ENCODE measurements at regions of chr6 and their contacts with region 1.

Region 1: GRCh38 chr6:137233911-137234863 is 15.0 kb upstream of the IFNGR1 start:
- DNase-seq: peak; percentile 27 to 99
- H3K4me3 ChIP-seq: peak overlapping the region; percentile 2; the same call in 1 of the 2 replicates
- H3K27ac ChIP-seq: peak overlapping the region; percentile 92
- H3K4me1 ChIP-seq: peaks cover 61% of the 10 kb centered on the region
- H3K27me3 ChIP-seq: no peaks in the 10 kb centered on the region
- CTCF ChIP-seq: no peak

Region 2: DNA sequence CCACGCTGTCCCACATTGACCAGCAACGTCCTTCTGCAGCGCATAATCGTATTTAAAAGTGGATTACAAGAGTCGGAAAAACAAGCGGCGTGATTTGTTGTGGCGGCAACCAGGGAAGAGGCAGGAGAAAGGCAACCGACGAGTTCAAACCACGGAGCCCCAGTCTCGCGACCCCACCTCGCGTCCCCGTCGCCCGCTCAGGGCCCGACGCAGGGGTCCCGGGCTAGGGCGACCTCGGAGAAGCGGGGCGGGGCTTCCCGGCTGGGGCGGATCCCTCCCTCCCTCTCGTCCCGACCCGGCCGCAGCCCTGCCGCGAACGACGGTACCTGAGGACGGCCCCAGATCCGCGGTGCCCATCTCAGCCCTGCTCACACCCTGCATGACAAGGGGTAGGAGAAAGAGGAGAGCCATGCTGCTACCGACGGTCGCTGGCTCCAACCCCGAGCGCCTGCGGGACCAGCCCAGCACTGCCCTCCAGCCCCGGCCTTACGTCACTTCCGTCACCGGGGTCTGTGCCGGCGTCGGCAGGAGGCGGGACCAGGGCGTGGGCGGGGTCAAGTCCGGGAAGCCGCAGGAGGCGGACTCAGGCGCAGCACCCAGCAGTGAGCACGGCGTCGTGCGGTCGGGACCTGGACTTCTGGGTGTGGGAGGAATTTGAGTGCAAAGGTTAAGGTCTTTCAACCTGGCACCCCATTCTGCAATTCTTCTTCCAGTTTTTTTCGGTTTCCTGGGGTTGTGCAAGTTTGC is 15.1 kb before region 1 on chr6 and contains the start of gene IFNGR1:
- CTCF ChIA-PET with region 1: no interaction called
- POLR2A ChIA-PET with region 1: interaction called, 32 read pairs
- intact Hi-C with region 1: loop called (anchors 2 kb)
- DNase-seq: peak; percentile 95 to 96
- H3K4me3 ChIP-seq: peak within 1 kb of the TSS; percentile 88
- H3K27ac ChIP-seq: peak within 1 kb of the TSS; percentile 90
- H3K4me1 ChIP-seq: peaks cover 55% of the 10 kb centered on the region
- H3K27me3 ChIP-seq: no peaks in the 10 kb centered on the region
- CTCF ChIP-seq: no peak
- total RNA-seq, gene IFNGR1: 17.9 and 19.5 TPM in 2 replicates

Region 3: GRCh38 chr6:137261393-137262160 is 27.4 kb after region 1 on chr6:
- CTCF ChIA-PET with region 1: no interaction called
- POLR2A ChIA-PET with region 1: no interaction called
- intact Hi-C with region 1: loop called (anchors 2 kb)
- DNase-seq: peak in 1 of 2 experiments; percentile 96
- H3K4me3 ChIP-seq: peak overlapping the region; percentile 28
- H3K27ac ChIP-seq: peak overlapping the region; percentile 68
- H3K4me1 ChIP-seq: peaks cover 20% of the 10 kb centered on the region
- H3K27me3 ChIP-seq: peaks cover 24% of the 10 kb centered on the region
- CTCF ChIP-seq: no peak

Region 4: DNA sequence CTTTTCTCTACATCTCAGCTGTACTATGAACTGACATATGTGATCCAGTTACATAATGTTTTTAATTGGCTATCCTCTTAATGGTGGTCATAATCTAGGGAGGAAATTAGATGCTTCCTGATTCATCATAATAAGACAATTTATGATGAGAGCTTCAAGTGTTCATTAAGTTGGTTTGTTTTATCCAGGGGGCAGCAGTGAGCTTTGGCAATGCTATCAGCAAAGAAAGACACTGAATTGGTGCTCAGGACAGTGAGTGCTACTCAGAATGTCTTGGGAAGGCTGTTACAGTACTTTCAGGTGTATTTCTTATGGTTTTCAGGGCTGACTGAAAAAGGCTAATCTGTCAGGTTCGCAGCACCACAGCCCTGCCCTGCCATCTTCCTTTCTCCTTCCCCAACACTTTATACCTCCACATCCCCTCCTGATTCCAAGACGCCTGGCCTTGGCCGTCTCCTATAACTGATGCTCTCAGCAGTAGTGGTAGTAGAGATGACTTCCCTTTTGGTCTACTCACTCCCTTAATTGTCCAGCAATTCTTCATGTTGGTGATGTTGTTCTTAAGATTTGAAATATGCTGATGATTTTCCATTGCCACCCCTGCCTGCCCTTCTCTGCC is 565.9 kb after region 1 on chr6:
- CTCF ChIA-PET with region 1: interaction called, 19 read pairs
- POLR2A ChIA-PET with region 1: no interaction called
- intact Hi-C with region 1: no loop called
- DNase-seq: peak in 1 of 2 experiments; percentile 14
- H3K4me3 ChIP-seq: no peak overlapping the region
- H3K27ac ChIP-seq: no peak overlapping the region
- H3K4me1 ChIP-seq: no peaks in the 10 kb centered on the region
- H3K27me3 ChIP-seq: no peaks in the 10 kb centered on the region
- CTCF ChIP-seq: peak; percentile 83